Naive thymus-derived CD4-positive, alpha-beta T cell (primary cell): ENCODE measurements at regions of chr4 and their contacts with region 1.

Region 1: GRCh38 chr4:142846729-142847596 is 862 bp upstream of the INPP4B start:
- DNase-seq: peak; percentile 39 to 81 (median 75)
- ATAC-seq: peak; percentile 89
- H3K4me3 ChIP-seq: peak overlapping the region; percentile 86
- H3K4me3 Mint-ChIP-seq: peak overlapping the region; percentile 85 to 94 (median 92)
- H3K27ac ChIP-seq: peak overlapping the region; percentile 54
- H3K27ac Mint-ChIP-seq: peak overlapping the region in 5 of 9 donors; percentile 26 to 76 (median 56)
- H3K4me1 ChIP-seq: peaks cover 5 to 7% of the 10 kb centered on the region in 2 donors
- H3K4me1 Mint-ChIP-seq: peaks cover 10 to 28% (median 16%) of the 10 kb centered on the region in 7 donors
- H3K27me3 ChIP-seq: peaks cover 0 to 4% of the 10 kb centered on the region in 2 donors
- H3K27me3 Mint-ChIP-seq: peaks cover 5 to 26% (median 22%) of the 10 kb centered on the region in 5 donors

Region 2: GRCh38 chr4:141220655-141221605 is 1626.0 kb before region 1 on chr4 and contains the start of gene ZNF330:
- CTCF ChIA-PET with region 1: no interaction called
- POLR2A ChIA-PET with region 1: no interaction called
- intact Hi-C with region 1: loop called (anchors 2 to 5 kb)
- DNase-seq: peak; percentile 80 to 97 (median 90)
- ATAC-seq: peak; percentile 97
- H3K4me3 ChIP-seq: peak within 1 kb of the TSS; percentile 94
- H3K4me3 Mint-ChIP-seq: peak within 1 kb of the TSS; percentile 91 to 99 (median 94)
- H3K27ac ChIP-seq: peak within 1 kb of the TSS; percentile 93
- H3K27ac Mint-ChIP-seq: peak within 1 kb of the TSS; percentile 91 to 97 (median 96)
- H3K4me1 ChIP-seq: peaks cover 9 to 13% of the 10 kb centered on the region in 2 donors
- H3K4me1 Mint-ChIP-seq: peaks cover 24 to 58% (median 52%) of the 10 kb centered on the region in 7 donors
- H3K27me3 ChIP-seq: no peaks in the 10 kb centered on the region
- H3K27me3 Mint-ChIP-seq: peaks cover 0 to 18% (median 6%) of the 10 kb centered on the region in 5 donors
- total RNA-seq, gene ZNF330: 31.7 to 44.7 (median 41.0) TPM

Region 3: GRCh38 chr4:141702472-141703182 is 1144.3 kb before region 1 on chr4:
- CTCF ChIA-PET with region 1: no interaction called
- POLR2A ChIA-PET with region 1: no interaction called
- intact Hi-C with region 1: loop called (anchors 1 to 2 kb)
- DNase-seq: no peak
- ATAC-seq: no peak
- H3K4me3 ChIP-seq: no peak overlapping the region
- H3K4me3 Mint-ChIP-seq: no peak overlapping the region
- H3K27ac ChIP-seq: no peak overlapping the region
- H3K27ac Mint-ChIP-seq: no peak overlapping the region
- H3K4me1 ChIP-seq: peaks cover 0 to 8% of the 10 kb centered on the region in 2 donors
- H3K4me1 Mint-ChIP-seq: peaks cover 0 to 4% (median 0%) of the 10 kb centered on the region in 7 donors
- H3K27me3 ChIP-seq: peaks cover 0 to 4% of the 10 kb centered on the region in 2 donors
- H3K27me3 Mint-ChIP-seq: peaks cover 0 to 9% (median 4%) of the 10 kb centered on the region in 5 donors

Region 4: DNA sequence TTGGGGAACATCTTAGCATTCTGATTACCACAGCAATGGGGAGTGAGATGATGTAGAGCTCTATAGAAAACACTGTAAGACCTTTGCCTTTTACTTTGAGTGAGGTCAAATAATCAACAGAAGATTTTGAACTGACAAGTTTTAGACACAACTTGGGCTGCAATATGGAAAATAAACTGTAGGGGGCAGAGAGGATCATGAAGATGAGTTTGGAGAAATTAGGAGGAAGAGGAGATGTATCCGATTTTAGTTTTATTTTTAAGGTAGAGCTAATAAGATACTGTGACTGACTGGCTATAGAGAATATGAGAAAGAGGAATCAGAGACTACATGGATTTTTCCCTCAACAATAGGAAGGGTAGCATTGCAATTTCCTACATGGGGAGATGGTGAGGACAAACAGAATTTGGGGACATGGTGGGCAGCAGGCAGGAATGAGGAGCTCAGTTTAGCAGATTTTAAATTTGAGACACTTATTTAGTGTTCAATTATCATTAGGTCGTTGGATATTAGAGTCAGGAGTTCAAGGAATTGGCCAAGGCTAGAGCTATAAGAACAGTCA is 564.0 kb before region 1 on chr4:
- CTCF ChIA-PET with region 1: interaction called, 7 read pairs
- POLR2A ChIA-PET with region 1: no interaction called
- intact Hi-C with region 1: loop called (anchors 1 kb)
- DNase-seq: peak in 7 of 9 donors; percentile 26 to 53 (median 38)
- ATAC-seq: peak; percentile 64
- H3K4me3 ChIP-seq: no peak overlapping the region
- H3K4me3 Mint-ChIP-seq: no peak overlapping the region
- H3K27ac ChIP-seq: no peak overlapping the region
- H3K27ac Mint-ChIP-seq: no peak overlapping the region
- H3K4me1 ChIP-seq: peaks cover 7 to 15% of the 10 kb centered on the region in 2 donors
- H3K4me1 Mint-ChIP-seq: peaks cover 9 to 35% (median 25%) of the 10 kb centered on the region in 7 donors
- H3K27me3 ChIP-seq: no peaks in the 10 kb centered on the region
- H3K27me3 Mint-ChIP-seq: no peaks in the 10 kb centered on the region

Region 5: DNA sequence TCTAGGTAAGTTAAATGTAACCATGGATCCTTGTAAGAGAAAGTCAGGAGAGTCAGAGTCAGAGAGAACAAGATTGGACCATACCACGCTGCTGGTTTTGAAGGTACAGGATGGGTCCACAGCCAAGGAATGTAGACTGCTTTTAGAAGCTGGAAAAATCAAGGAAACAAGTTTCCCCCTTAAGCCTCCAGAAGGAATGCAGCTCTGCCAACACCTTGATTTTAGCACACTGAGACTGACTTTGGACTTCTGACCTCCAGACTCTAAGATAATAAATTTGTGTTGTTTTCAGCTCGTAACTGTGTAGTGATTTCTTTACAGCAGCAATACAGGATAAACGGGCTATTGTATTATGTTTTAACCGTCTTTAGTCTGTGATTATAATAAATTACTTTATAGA is 229.8 kb after region 1 on chr4:
- CTCF ChIA-PET with region 1: no interaction called
- POLR2A ChIA-PET with region 1: no interaction called
- intact Hi-C with region 1: no loop called
- DNase-seq: no peak
- ATAC-seq: no peak
- H3K4me3 ChIP-seq: no peak overlapping the region
- H3K4me3 Mint-ChIP-seq: no peak overlapping the region
- H3K27ac ChIP-seq: no peak overlapping the region
- H3K27ac Mint-ChIP-seq: no peak overlapping the region
- H3K4me1 ChIP-seq: no peaks in the 10 kb centered on the region
- H3K4me1 Mint-ChIP-seq: no peaks in the 10 kb centered on the region
- H3K27me3 ChIP-seq: no peaks in the 10 kb centered on the region
- H3K27me3 Mint-ChIP-seq: peaks cover 5 to 45% (median 13%) of the 10 kb centered on the region in 5 donors

Region 6: DNA sequence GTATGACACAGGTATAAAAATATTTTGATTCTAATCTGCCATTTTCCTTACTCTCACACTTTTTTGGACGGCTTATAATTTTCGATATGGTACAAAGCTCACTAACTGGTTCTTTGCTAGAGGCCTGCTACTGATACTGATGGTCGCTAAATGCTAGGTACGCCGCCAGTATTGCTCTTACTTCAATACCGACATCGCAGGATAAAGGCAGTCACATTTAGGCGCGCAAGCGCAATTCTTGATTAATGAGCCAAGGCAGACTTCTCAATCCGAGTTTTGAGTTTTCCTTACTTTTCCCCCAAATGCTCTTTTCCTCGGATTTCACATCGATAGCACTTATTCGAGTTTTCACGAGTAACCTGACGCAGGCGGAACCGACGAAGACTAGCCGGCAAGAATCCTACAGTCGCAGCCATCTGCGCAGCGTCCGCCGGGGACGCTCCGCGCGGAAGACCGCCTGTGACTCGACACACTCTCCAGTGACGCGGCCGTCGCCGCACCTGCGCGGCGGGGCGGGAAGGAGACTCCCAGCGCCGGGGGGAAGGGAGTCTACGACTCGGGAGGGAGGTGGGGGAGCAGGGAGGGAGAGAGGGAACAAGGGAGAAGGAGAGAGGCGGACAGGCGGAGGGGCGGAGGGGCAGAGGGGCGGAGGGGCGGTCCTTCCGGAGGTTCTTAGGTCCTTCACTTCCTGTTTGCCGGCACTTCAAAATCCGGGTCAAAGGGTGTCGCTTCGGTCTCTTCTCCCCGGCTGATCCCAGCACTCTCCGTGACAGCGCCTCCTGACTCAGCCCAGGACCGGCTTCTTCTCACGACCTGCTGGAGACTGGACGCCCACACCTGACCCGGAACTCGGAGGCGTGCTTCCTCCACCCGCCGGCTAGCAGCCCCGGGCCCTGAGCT is 337.5 kb after region 1 on chr4 and contains the start of gene USP38:
- CTCF ChIA-PET with region 1: no interaction called
- POLR2A ChIA-PET with region 1: no interaction called
- intact Hi-C with region 1: loop called (anchors 1 to 5 kb)
- DNase-seq: peak; percentile 74 to 90 (median 85)
- ATAC-seq: peak; percentile 91
- H3K4me3 ChIP-seq: peak within 1 kb of the TSS; percentile 78
- H3K4me3 Mint-ChIP-seq: peak within 1 kb of the TSS; percentile 78 to 99 (median 94)
- H3K27ac ChIP-seq: peak within 1 kb of the TSS; percentile 96
- H3K27ac Mint-ChIP-seq: peak within 1 kb of the TSS; percentile 93 to 99 (median 97)
- H3K4me1 ChIP-seq: peaks cover 27% of the 10 kb centered on the region in 2 donors
- H3K4me1 Mint-ChIP-seq: peaks cover 41 to 82% (median 70%) of the 10 kb centered on the region in 7 donors
- H3K27me3 ChIP-seq: no peaks in the 10 kb centered on the region
- H3K27me3 Mint-ChIP-seq: no peaks in the 10 kb centered on the region
- total RNA-seq, gene USP38: 22.4 to 28.8 (median 24.3) TPM